Activated CD8-positive, alpha-beta T cell treated with anti-CD3 and anti-CD28 coated beads for 36 hours (primary cell): ENCODE measurements at regions of chr7 and their contacts with region 1.

Region 1: GRCh38 chr7:5139998-5140397 is 50.0 kb upstream of the WIPI2 start:
- DNase-seq: peak; percentile 53
- ATAC-seq: no peak
- H3K4me3 Mint-ChIP-seq: no peak overlapping the region
- H3K27ac Mint-ChIP-seq: no peak overlapping the region
- H3K4me1 Mint-ChIP-seq: peaks cover 13% of the 10 kb centered on the region
- H3K27me3 Mint-ChIP-seq: no peaks in the 10 kb centered on the region
- CTCF ChIP-seq: no peak

Region 2: DNA sequence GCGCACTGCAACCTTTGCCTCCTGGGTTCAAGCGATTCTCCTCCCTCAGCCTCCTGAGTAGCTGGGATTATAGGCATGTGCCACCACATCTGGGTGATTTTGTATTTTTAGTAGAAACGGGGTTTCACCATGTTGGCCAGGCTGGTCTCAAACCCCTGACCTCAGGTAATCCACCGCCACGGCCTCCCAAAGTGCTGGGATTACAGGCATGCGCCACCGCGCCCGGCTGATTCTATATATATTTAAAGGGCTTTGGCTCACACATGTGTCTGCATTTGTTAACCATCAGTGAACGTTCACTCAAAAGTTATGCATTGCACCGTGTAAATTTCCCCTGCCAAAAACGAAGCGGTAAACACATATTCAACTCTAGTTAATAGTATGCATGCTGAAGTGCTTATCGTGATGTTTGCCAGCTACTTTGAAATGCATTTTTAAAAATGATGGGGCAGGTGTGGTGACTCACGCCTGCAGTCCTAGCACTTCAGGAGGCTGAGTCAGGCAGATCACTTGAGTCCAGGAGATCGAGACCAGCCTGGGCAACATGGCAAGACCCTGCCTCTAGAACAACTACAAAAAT is 32.3 kb after region 1 on chr7:
- CTCF ChIA-PET with region 1: interaction called, 23 read pairs
- POLR2A ChIA-PET with region 1: interaction called, 3 read pairs
- intact Hi-C with region 1: no loop called
- DNase-seq: no peak
- ATAC-seq: no peak
- H3K4me3 Mint-ChIP-seq: no peak overlapping the region
- H3K27ac Mint-ChIP-seq: no peak overlapping the region
- H3K4me1 Mint-ChIP-seq: peaks cover 5% of the 10 kb centered on the region
- H3K27me3 Mint-ChIP-seq: no peaks in the 10 kb centered on the region
- CTCF ChIP-seq: no peak

Region 3: DNA sequence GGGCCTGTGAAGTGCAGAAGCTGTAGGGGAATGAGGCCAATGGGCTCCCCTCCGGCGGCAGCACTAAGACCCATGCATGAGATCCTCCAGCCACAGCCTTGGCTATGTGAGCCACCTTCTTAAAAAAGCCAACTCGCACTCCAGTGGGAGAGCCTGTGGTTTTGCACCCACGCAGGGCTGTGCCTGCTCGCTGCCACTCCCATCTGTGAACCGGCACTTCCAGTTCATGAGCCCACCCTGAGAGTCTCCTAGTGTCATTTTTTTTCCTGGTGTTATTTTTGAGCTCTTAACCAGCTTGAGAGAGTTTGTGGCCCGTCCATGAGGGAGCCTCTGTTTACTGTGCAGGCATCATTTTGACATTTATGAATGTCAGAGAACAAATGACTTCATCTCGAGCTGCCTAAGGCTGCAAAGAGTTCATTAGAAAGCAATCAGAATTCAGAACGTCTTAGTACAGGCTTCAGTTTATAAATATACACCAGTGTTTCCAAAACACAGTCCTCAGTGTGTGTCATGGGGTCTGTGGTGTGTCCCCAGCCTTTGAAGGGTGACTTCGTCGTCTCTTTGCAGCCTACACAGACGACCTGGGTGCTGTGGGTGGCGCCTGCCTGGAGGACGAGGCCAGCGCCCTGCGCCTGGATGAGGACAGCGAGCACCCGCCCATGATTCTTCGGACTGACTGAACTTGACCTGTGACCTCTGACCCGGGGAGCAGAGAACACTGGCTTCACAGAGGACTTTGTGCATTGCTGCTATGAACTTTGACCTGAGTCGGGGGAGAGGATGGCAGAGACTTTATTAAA is 90.5 kb after region 1 on chr7:
- CTCF ChIA-PET with region 1: no interaction called
- POLR2A ChIA-PET with region 1: no interaction called
- intact Hi-C with region 1: no loop called
- DNase-seq: peak; percentile 24
- ATAC-seq: peak; percentile 35
- H3K4me3 Mint-ChIP-seq: no peak overlapping the region
- H3K27ac Mint-ChIP-seq: peak overlapping the region; percentile 16
- H3K4me1 Mint-ChIP-seq: peaks cover 44% of the 10 kb centered on the region
- H3K27me3 Mint-ChIP-seq: no peaks in the 10 kb centered on the region
- CTCF ChIP-seq: no peak

Region 4: DNA sequence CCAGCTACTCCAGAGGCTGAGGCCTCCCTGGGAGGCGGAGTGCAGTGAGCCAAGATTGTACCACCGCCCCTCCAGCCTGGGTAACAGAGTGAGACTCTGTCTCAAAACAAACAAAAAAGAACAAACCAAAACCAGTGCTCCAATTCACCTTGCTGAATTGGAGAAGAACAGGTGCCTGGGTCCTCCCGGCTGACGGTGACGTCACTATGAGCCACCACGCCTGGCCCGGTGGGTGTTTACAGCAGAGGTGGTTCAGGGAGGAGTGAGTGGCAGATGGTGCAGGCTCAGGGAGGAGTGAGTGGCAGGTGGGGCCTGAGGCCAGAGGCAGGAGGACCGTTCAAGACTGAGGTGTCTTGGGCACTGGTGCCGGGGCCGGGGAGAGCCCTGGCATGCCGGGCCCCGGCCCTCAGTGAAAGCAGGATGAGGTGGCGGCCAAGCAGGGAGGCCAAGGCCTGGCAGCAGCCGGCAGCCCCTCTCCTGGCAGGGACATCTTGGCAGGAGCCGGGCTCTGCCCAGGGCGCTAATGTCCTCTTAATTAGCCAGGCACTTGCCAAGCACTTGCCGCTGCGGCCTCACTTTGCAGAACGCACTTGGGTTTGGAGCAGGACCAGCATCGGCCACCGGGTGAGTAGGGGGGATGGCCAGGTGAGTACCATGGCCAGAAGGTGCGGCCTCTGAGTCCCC is 446.4 kb after region 1 on chr7:
- CTCF ChIA-PET with region 1: no interaction called
- POLR2A ChIA-PET with region 1: no interaction called
- intact Hi-C with region 1: loop called (anchors 5 kb)
- DNase-seq: no peak
- ATAC-seq: peak; percentile 32
- H3K4me3 Mint-ChIP-seq: no peak overlapping the region
- H3K27ac Mint-ChIP-seq: no peak overlapping the region
- H3K4me1 Mint-ChIP-seq: peaks cover 10% of the 10 kb centered on the region
- H3K27me3 Mint-ChIP-seq: peaks cover 7% of the 10 kb centered on the region
- CTCF ChIP-seq: no peak